ENCODE measurements at regions of chr10 and their contacts with region 1.

Region 1: GRCh38 chr10:16835228-16835627 is 18.0 kb upstream of the RSU1 start:
- DNase-seq: no peak
- ATAC-seq: peak; percentile 95
- H3K4me3 Mint-ChIP-seq: peak overlapping the region; percentile 67
- H3K27ac Mint-ChIP-seq: peak overlapping the region; percentile 44
- H3K4me1 Mint-ChIP-seq: peaks cover 14% of the 10 kb centered on the region
- H3K27me3 Mint-ChIP-seq: no peaks in the 10 kb centered on the region

Region 2: DNA sequence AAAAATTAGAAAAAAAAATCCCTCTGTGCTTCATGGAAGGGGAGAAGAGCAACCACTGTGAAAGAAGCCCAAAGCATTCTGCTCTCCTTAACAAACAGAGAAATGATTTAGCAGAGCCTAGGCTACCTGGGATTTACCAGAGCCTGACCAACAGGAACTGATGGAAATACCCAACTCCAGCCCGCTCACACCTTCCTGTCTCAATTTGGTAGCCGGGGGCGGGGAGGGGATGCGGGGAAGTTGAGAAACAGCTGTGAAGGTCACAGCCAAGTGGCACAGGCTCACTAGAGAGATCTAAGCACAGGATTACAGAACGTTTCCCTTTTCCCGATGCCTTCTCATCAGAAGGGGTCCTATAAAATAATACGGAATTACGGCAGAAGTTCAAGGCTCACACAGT is 35.6 kb before region 1 on chr10:
- POLR2A ChIA-PET with region 1: no interaction called
- DNase-seq: no peak
- ATAC-seq: no peak
- H3K4me3 Mint-ChIP-seq: no peak overlapping the region
- H3K27ac Mint-ChIP-seq: no peak overlapping the region
- H3K4me1 Mint-ChIP-seq: peaks cover 8% of the 10 kb centered on the region
- H3K27me3 Mint-ChIP-seq: no peaks in the 10 kb centered on the region

Region 3: DNA sequence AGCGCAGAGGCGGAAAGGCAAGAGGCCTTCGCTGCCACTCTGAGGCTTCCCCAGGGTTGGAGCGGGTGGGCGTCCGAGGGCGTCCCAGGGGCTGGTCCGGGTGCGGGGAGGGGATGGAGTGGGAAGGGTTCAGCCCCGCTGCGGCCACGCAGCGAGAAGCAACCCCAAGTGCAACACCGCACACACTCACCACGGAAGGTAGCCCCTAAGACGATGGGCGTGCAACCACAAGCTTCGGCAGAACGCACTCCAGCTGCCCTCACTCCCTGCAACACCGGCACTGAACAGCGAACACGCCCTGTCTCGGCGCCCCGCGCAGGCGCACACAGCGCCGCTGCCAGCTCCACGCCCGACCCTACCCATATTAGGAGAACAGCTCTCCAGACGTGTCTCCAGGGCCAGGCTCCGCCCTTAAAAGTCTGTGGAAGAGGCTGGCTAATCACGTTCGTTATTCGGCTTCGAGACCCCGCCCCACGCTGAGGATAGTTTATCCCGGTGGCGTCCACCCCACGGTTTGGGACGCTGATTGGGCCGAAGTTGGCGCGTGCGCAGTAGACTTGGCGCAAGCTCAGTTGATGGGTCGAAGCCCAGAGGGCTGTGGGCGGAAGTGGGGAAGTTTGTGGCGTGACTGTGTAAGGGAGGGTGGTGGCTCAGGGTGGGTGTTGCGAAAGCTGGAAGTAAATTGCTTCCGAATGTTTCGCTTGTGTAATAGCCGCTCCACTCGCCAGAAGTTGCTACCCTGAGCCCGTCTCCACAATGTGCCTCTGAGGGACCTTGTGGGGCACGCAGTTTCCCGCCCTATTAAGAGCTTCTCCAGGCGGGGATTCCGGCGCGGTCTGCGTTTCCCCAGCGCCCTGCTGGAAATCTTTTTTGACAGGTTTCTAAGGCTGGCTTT is 17.9 kb before region 1 on chr10 and contains the start of gene RSU1:
- POLR2A ChIA-PET with region 1: interaction called, 15 read pairs
- DNase-seq: peak; percentile 100
- ATAC-seq: peak; percentile 97
- H3K4me3 Mint-ChIP-seq: peak within 1 kb of the TSS; percentile 86
- H3K27ac Mint-ChIP-seq: peak within 1 kb of the TSS; percentile 96
- H3K4me1 Mint-ChIP-seq: peaks cover 24% of the 10 kb centered on the region
- H3K27me3 Mint-ChIP-seq: peaks cover 2% of the 10 kb centered on the region
- total RNA-seq, gene RSU1: 69.5 to 72.7 TPM